CD8-positive, alpha-beta T cell (primary cell): ENCODE measurements at regions of chr14 and their contacts with region 1.

Region 1: GRCh38 chr14:22872033-22872832 is 693 bp downstream of the LRP10 start:
- DNase-seq: peak; percentile 47 to 82 (median 73)
- ATAC-seq: peak; percentile 46
- H3K4me3 ChIP-seq: peak overlapping the region; percentile 82 to 83
- H3K4me3 Mint-ChIP-seq: peak overlapping the region; percentile 91
- H3K27ac ChIP-seq: peak overlapping the region; percentile 85 to 94
- H3K27ac Mint-ChIP-seq: peak overlapping the region; percentile 99
- H3K4me1 ChIP-seq: peaks cover 28% of the 10 kb centered on the region
- H3K4me1 Mint-ChIP-seq: peaks cover 36% of the 10 kb centered on the region
- H3K27me3 ChIP-seq: no peaks in the 10 kb centered on the region
- H3K27me3 Mint-ChIP-seq: no peaks in the 10 kb centered on the region
- CTCF ChIP-seq: peak; percentile 86

Region 2: GRCh38 chr14:22589096-22589839 is 283.0 kb before region 1 on chr14 and contains the start of gene DAD1:
- CTCF ChIA-PET with region 1: interaction called, 4 read pairs
- POLR2A ChIA-PET with region 1: no interaction called
- intact Hi-C with region 1: loop called in 1 of 2 experiments (anchors 2 kb)
- DNase-seq: peak; percentile 99 to 100 (median 100)
- ATAC-seq: peak; percentile 86
- H3K4me3 ChIP-seq: peak within 1 kb of the TSS; percentile 64 to 67
- H3K4me3 Mint-ChIP-seq: peak within 1 kb of the TSS; percentile 98
- H3K27ac ChIP-seq: peak within 1 kb of the TSS; percentile 95 to 99
- H3K27ac Mint-ChIP-seq: peak within 1 kb of the TSS; percentile 100
- H3K4me1 ChIP-seq: peaks cover 47% of the 10 kb centered on the region
- H3K4me1 Mint-ChIP-seq: peaks cover 49% of the 10 kb centered on the region
- H3K27me3 ChIP-seq: no peaks in the 10 kb centered on the region
- H3K27me3 Mint-ChIP-seq: no peaks in the 10 kb centered on the region
- CTCF ChIP-seq: no peak
- total RNA-seq, gene DAD1: 27.2 to 35.6 TPM

Region 3: GRCh38 chr14:22678221-22678620 is 194.0 kb before region 1 on chr14:
- CTCF ChIA-PET with region 1: no interaction called
- POLR2A ChIA-PET with region 1: no interaction called
- intact Hi-C with region 1: no loop called
- DNase-seq: no peak
- ATAC-seq: no peak
- H3K4me3 ChIP-seq: no peak overlapping the region
- H3K4me3 Mint-ChIP-seq: no peak overlapping the region
- H3K27ac ChIP-seq: no peak overlapping the region
- H3K27ac Mint-ChIP-seq: no peak overlapping the region
- H3K4me1 ChIP-seq: no peaks in the 10 kb centered on the region
- H3K4me1 Mint-ChIP-seq: no peaks in the 10 kb centered on the region
- H3K27me3 ChIP-seq: no peaks in the 10 kb centered on the region
- H3K27me3 Mint-ChIP-seq: peaks cover 29% of the 10 kb centered on the region
- CTCF ChIP-seq: no peak

Region 4: GRCh38 chr14:22829661-22830442 is 42.4 kb before region 1 on chr14 and contains the start of gene MRPL52:
- CTCF ChIA-PET with region 1: interaction called, 35 read pairs
- POLR2A ChIA-PET with region 1: interaction called, 4 read pairs
- intact Hi-C with region 1: loop called in 1 of 2 experiments (anchors 1 kb)
- DNase-seq: peak; percentile 81 to 97 (median 90)
- ATAC-seq: peak; percentile 95
- H3K4me3 ChIP-seq: peak within 1 kb of the TSS; percentile 89 to 91
- H3K4me3 Mint-ChIP-seq: peak within 1 kb of the TSS; percentile 92
- H3K27ac ChIP-seq: peak within 1 kb of the TSS; percentile 69 to 90
- H3K27ac Mint-ChIP-seq: peak within 1 kb of the TSS; percentile 96
- H3K4me1 ChIP-seq: peaks cover 13% of the 10 kb centered on the region
- H3K4me1 Mint-ChIP-seq: peaks cover 31% of the 10 kb centered on the region
- H3K27me3 ChIP-seq: peaks cover 0 to 5% of the 10 kb centered on the region in 2 experiments
- H3K27me3 Mint-ChIP-seq: peaks cover 7% of the 10 kb centered on the region
- CTCF ChIP-seq: no peak
- total RNA-seq, gene MRPL52: 22.3 to 25.7 TPM

Region 5: DNA sequence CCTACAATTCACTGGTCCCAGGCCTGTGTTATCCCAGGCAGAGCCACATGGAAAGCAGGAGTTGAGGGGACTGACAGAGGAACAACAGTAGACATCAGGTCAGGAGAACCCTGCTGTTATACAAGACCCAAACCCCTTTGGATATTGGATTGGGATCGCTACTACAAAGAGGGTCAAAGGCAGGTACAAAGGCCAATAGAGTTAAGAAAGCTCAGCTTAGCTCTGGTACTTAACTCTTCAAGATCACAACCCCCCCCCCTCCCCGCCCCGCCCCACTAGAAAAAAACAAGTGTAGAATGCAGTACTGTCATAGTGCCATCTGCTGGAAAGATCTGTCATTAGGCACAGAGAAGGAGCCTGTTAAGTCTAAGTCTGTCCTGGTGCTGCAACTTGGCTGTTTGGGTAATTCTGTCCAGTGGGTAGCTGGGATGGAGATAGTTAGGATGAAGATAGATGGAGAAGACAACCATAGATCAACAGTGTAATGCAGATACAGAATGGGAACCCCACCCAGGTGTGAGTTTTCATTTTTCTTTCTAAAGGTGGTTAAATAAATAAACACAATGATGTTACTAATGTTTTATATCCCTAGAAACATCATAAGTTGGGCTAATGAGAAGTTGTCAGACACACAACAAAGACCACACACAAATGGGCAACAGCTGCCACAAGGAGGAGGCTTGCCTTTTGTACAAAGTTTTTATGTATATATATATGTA is 28.0 kb after region 1 on chr14:
- CTCF ChIA-PET with region 1: interaction called, 58 read pairs
- POLR2A ChIA-PET with region 1: interaction called, 4 read pairs
- intact Hi-C with region 1: loop called (anchors 1 kb)
- DNase-seq: peak in 5 of 9 experiments; percentile 33 to 82 (median 48)
- ATAC-seq: peak; percentile 86
- H3K4me3 ChIP-seq: no peak overlapping the region
- H3K4me3 Mint-ChIP-seq: no peak overlapping the region
- H3K27ac ChIP-seq: no peak overlapping the region
- H3K27ac Mint-ChIP-seq: no peak overlapping the region
- H3K4me1 ChIP-seq: peaks cover 3% of the 10 kb centered on the region
- H3K4me1 Mint-ChIP-seq: peaks cover 6% of the 10 kb centered on the region
- H3K27me3 ChIP-seq: no peaks in the 10 kb centered on the region
- H3K27me3 Mint-ChIP-seq: no peaks in the 10 kb centered on the region
- CTCF ChIP-seq: peak; percentile 60

Region 6: DNA sequence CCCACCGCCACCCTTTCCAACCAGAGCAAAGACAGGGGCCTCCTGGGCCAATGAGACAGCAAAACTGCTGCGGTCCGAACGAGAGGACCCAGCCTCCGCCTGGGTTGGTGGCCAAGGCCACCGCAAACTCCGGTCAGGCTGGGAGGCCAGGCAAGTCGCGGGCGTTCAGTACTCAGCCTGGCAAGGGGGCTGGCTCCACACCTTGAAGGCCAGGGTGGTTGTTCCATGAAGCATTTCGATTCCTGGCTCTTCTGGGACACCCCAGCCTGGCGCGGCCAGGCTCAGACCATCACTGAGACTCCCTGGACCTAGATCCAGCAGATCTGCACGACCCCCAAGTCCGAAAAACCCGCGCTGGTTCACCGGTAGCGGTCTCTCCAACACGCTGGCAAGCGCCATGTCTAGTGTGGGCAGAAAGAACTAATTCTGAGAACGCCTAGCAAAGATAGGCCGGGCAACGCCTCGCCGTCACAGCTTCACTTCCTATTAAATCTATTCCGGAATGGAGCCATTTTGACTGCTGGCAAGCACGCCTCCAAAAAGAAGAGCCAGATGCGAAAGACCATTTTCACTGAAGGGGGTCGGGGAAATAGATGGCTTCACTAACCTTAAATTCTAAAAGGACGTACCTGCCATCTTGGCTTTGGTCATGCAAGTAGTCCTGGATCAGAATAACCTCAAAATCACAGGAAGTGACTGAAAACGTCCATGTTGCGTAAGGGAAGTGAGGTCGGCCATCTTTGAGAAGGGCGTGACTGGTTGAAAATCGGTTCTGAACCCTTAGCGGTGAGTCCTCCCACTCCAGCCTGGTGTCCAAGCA is 162.5 kb after region 1 on chr14 and contains the start of gene PSMB5:
- CTCF ChIA-PET with region 1: no interaction called
- POLR2A ChIA-PET with region 1: no interaction called
- intact Hi-C with region 1: loop called in 1 of 2 experiments (anchors 1 kb)
- DNase-seq: peak; percentile 74 to 97 (median 87)
- ATAC-seq: peak; percentile 91
- H3K4me3 ChIP-seq: peak within 1 kb of the TSS; percentile 67 to 71
- H3K4me3 Mint-ChIP-seq: peak within 1 kb of the TSS; percentile 90
- H3K27ac ChIP-seq: peak within 1 kb of the TSS; percentile 75 to 97
- H3K27ac Mint-ChIP-seq: peak within 1 kb of the TSS; percentile 98
- H3K4me1 ChIP-seq: peaks cover 21% of the 10 kb centered on the region
- H3K4me1 Mint-ChIP-seq: peaks cover 34% of the 10 kb centered on the region
- H3K27me3 ChIP-seq: no peaks in the 10 kb centered on the region
- H3K27me3 Mint-ChIP-seq: no peaks in the 10 kb centered on the region
- CTCF ChIP-seq: no peak
- total RNA-seq, gene PSMB5: 18.6 to 20.2 TPM